AG04449 (cell line): ENCODE measurements at regions of chr17 and their contacts with region 1.

Region 1: DNA sequence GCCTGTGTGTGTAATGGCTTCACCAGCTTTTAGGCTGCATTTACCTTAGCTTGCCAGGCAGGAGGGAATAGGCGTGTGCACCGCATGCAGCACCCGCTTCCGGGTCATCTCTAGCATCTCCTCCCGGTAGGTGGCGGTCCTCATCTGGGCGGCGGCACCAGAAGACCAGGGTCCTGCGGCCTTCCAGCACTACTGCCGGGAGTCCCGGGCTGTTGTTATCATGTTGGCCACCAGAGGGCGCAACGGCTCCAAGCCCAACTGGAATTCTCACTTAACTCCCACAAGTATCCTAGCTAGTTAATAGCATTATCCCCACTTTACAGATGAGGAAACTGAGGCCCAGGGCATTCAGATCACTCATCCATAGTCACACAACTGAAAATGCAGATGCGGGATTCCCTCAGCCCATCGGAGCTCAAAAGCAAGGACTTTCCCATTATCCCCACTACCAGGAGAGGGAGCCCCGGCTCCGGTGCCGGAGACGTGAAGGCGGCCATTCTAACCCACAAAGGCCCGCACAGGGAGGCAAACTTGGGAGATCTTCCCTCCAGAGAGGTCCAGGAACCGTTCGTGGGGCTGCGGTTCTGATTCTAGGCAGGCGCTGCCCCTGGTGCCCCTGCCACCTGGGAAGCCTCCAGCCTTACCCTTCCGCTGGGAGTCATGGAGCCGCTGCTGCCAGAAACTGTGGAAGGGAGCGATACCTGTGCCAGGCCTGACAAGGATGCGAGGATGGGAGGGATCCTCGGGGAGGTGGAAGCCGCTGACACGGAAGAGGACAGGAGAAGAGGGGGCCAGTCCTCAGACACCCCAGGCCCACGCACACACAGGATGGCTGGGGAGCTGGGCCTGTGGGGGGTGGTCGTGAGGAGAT is 23.9 kb downstream of the LGALS9 start:
- DNase-seq: no peak
- H3K4me3 ChIP-seq: no peak overlapping the region
- CTCF ChIP-seq: peak; percentile 78

Region 2: GRCh38 chr17:27199948-27200347 is 454.9 kb before region 1 on chr17:
- CTCF ChIA-PET with region 1: interaction called, 19 read pairs
- POLR2A ChIA-PET with region 1: no interaction called
- DNase-seq: no peak
- H3K4me3 ChIP-seq: no peak overlapping the region
- CTCF ChIP-seq: no peak

Region 3: GRCh38 chr17:27293898-27294688 is 360.8 kb before region 1 on chr17 and contains the start of gene WSB1:
- CTCF ChIA-PET with region 1: no interaction called
- POLR2A ChIA-PET with region 1: no interaction called
- DNase-seq: peak; percentile 45
- H3K4me3 ChIP-seq: peak within 1 kb of the TSS; percentile 98
- CTCF ChIP-seq: no peak

Region 4: GRCh38 chr17:27396941-27397340 is 257.9 kb before region 1 on chr17:
- CTCF ChIA-PET with region 1: no interaction called
- POLR2A ChIA-PET with region 1: no interaction called
- DNase-seq: no peak
- H3K4me3 ChIP-seq: no peak overlapping the region
- CTCF ChIP-seq: no peak

Region 5: DNA sequence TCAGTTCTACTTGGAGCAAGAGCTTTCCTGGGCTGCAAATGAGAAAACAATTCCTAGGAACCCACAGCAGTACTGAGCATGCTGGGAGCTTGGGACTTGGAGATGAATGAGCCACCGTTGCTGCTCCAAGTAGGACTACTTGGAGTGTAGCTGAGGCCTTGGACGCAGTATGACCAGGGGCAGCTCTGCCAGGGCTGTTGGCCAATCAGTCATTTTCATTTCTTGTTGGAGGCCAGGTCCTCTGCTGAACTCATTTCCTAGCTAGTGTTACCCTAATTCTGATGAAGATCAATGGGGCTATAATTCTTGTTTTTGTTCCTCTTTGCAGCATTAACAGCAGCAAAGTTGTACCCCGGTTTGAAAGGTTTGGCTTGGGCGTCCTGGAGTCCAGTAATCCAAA is 31.9 kb before region 1 on chr17:
- CTCF ChIA-PET with region 1: interaction called, 17 read pairs
- POLR2A ChIA-PET with region 1: no interaction called
- DNase-seq: no peak
- H3K4me3 ChIP-seq: no peak overlapping the region
- CTCF ChIP-seq: no peak

Region 6: DNA sequence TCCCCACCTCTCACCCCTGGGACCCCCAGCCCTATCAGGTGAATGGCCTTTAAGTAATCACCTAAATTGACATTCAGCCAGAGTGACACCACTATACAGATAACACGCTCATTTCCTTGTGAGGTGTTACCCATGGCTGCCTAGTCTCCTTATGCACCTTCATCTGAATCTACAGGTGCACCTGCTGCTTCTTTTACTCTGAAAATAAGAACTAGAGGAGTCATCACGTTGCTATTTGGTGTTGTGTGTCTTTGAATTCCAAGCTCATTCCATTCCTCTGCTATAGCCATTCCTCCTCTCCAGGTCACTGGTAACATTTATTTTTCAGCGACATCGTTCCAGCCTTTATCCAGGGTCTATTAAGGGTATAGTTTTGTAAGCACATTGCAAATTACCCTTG is 14.1 kb before region 1 on chr17:
- CTCF ChIA-PET with region 1: interaction called, 28 read pairs
- POLR2A ChIA-PET with region 1: no interaction called
- DNase-seq: no peak
- H3K4me3 ChIP-seq: no peak overlapping the region
- CTCF ChIP-seq: no peak

Region 7: GRCh38 chr17:27692766-27693165 is 37.9 kb after region 1 on chr17:
- CTCF ChIA-PET with region 1: no interaction called
- POLR2A ChIA-PET with region 1: no interaction called
- DNase-seq: no peak
- H3K4me3 ChIP-seq: no peak overlapping the region
- CTCF ChIP-seq: no peak

Region 8: GRCh38 chr17:27760069-27760885 is 105.4 kb after region 1 on chr17:
- CTCF ChIA-PET with region 1: interaction called, 156 read pairs
- POLR2A ChIA-PET with region 1: no interaction called
- DNase-seq: no peak
- H3K4me3 ChIP-seq: no peak overlapping the region
- CTCF ChIP-seq: peak; percentile 78

Region 9: DNA sequence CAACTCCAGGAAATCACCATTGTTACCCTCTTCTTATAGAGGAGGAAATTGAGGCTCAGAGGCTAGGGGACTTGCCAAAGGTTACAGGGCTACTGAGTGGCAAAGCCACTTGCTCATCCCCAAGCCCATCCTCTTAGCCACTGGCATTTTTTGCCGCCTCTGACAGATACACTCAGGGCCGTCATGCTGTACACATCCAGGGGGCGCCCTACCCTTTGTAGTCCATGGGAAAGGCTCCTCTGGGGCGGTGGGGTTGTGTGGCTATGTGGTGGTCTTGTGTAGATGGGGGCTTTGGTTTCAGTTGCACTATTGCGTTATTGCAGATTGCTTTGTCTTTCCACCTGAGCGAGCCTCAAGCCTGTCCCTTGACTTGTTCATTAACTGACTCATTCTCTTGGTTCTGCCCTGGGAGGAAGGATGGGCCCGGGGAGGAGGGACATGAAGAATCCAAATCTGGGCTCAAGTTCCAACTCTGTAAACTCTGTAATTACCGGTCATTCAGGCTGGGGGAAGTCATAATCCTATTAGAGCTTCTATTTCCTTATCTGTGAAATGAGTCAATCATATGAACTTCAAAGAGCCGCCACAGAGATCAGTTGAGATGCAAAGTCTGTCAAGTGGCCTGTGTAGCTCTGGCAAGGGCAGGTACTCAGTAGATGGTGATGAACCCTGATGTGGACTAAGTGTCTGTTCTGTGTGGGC is 142.7 kb after region 1 on chr17:
- CTCF ChIA-PET with region 1: no interaction called
- POLR2A ChIA-PET with region 1: no interaction called
- DNase-seq: no peak
- H3K4me3 ChIP-seq: no peak overlapping the region
- CTCF ChIP-seq: no peak